GM23248 (cell line): ENCODE measurements at regions of chr20 and their contacts with region 1.

Region 1: DNA sequence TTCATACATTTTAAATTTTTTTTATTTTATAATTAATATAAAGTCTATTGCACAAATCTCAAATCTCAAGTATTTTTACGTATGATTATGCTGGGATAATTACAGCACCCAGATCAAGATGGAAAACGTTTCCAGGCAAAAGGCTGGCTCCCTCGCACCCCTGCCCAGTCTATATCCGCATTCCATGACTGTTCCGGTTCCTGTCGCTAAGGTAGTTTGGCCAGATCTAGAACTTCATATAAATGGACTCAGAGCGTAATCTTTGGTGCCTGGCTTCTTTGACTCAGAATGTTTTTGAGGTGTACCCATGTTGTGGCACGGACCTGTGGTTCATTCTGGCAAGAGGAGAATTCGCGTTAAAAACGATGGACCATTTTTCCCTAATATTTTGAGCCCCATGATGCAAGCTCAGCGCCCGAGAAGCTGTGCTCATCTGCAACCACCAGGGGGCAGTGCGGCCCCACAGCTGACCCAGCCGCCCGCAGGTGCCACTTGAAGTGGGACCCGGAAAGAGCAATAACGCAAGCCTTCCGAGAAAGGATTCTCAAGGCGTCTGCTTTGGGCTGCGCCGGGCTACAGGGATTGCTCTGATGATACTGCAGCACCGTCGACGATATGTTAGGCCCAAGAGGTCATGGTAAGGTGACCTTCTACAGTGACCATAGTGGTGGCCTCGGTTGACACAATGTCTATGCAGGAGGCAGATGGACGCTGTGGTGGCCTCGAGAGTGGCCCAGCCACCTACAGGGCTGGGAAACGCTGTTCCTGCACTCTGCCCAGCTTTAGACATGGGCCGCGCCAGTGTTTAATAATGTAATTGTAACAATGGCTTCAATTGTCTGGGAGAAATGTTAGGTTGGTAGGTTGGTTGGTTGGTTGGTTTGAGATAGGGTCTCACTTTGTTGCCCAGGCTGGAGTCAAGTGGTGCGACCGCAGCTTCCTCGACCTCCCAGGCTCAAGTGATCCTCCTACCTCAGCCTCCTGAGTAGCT is 160.1 kb downstream of the ZMYND8 start:
- DNase-seq: peak; percentile 81
- H3K4me3 ChIP-seq: peak overlapping the region; percentile 33; the same call in 1 of the 2 replicates
- H3K27ac ChIP-seq: no peak overlapping the region
- H3K4me1 ChIP-seq: no peaks in the 10 kb centered on the region
- H3K27me3 ChIP-seq: no peaks in the 10 kb centered on the region

Region 2: GRCh38 chr20:47125583-47126373 is 70.6 kb before region 1 on chr20:
- in situ Hi-C with region 1: no loop called
- DNase-seq: peak; percentile 11
- H3K4me3 ChIP-seq: no peak overlapping the region
- H3K27ac ChIP-seq: peak overlapping the region; percentile 38
- H3K4me1 ChIP-seq: peaks cover 38% of the 10 kb centered on the region
- H3K27me3 ChIP-seq: no peaks in the 10 kb centered on the region

Region 3: GRCh38 chr20:47540443-47541354 is 344.3 kb after region 1 on chr20:
- in situ Hi-C with region 1: no loop called
- DNase-seq: peak; percentile 50
- H3K4me3 ChIP-seq: no peak overlapping the region
- H3K27ac ChIP-seq: 0 out of 2 replicates have a peak overlapping the region, but pooled peaks have one; percentile 20
- H3K4me1 ChIP-seq: peaks cover 35% of the 10 kb centered on the region
- H3K27me3 ChIP-seq: no peaks in the 10 kb centered on the region

Region 4: GRCh38 chr20:47638851-47639250 is 442.5 kb after region 1 on chr20:
- in situ Hi-C with region 1: loop called (anchors 10 kb)
- DNase-seq: no peak
- H3K4me3 ChIP-seq: no peak overlapping the region
- H3K27ac ChIP-seq: no peak overlapping the region
- H3K4me1 ChIP-seq: no peaks in the 10 kb centered on the region
- H3K27me3 ChIP-seq: no peaks in the 10 kb centered on the region